Activated CD8-positive, alpha-beta T cell treated with anti-CD3 and anti-CD28 coated beads, Interleukin-2, amount 10 ng/mL, durations not matched to agents 7 days and 5 days (primary cell): ENCODE measurements at regions of chr17 and their contacts with region 1.

Region 1: GRCh38 chr17:2282297-2282873 is 21.2 kb downstream of the SMG6 start:
- DNase-seq: no peak
- ATAC-seq: peak; percentile 54
- H3K4me3 Mint-ChIP-seq: no peak overlapping the region
- H3K27ac Mint-ChIP-seq: peak overlapping the region; percentile 76
- H3K4me1 Mint-ChIP-seq: peaks cover 50% of the 10 kb centered on the region
- H3K27me3 Mint-ChIP-seq: no peaks in the 10 kb centered on the region

Region 2: GRCh38 chr17:1643293-1643998 is 638.9 kb before region 1 on chr17:
- CTCF ChIA-PET with region 1: no interaction called
- POLR2A ChIA-PET with region 1: no interaction called
- DNase-seq: peak; percentile 70
- ATAC-seq: peak; percentile 64
- H3K4me3 Mint-ChIP-seq: peak overlapping the region; percentile 73
- H3K27ac Mint-ChIP-seq: no peak overlapping the region
- H3K4me1 Mint-ChIP-seq: peaks cover 35% of the 10 kb centered on the region
- H3K27me3 Mint-ChIP-seq: no peaks in the 10 kb centered on the region

Region 3: DNA sequence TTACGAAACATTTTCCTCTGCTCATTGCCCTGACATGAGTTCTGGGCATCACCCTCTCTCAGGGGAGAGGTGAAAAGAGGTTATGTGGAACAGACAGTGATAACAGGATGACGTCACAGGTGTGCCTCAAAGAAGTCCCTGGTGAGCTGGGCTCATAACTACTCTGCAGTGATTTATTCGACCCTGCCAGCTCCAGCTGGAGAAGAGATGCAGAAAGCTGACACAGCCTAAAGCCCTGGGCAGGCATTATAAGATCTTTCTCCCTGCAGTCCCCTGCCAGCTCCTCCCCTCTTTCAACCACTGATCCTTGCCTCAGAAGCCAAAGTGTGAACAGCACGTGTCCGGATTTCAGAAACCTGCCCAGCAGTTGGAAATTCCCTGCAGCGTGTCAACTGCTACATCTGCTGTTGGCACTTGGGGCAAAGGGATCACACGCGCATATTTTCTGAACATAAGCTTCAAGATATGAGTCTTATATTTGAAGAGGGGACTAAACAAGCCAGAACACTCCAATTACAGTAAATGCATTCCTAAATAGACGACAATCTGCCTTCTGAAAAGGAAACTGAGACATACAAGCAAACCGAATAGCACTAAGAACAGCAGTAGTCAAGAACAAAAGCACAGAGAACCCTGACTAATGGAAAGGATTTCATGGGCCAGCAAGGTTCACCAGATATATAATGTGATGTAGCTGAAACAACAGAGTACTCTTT is 59.3 kb before region 1 on chr17:
- CTCF ChIA-PET with region 1: interaction called, 11 read pairs
- POLR2A ChIA-PET with region 1: no interaction called
- DNase-seq: peak; percentile 62
- ATAC-seq: peak; percentile 82
- H3K4me3 Mint-ChIP-seq: no peak overlapping the region
- H3K27ac Mint-ChIP-seq: peak overlapping the region; percentile 26
- H3K4me1 Mint-ChIP-seq: peaks cover 41% of the 10 kb centered on the region
- H3K27me3 Mint-ChIP-seq: no peaks in the 10 kb centered on the region

Region 4: DNA sequence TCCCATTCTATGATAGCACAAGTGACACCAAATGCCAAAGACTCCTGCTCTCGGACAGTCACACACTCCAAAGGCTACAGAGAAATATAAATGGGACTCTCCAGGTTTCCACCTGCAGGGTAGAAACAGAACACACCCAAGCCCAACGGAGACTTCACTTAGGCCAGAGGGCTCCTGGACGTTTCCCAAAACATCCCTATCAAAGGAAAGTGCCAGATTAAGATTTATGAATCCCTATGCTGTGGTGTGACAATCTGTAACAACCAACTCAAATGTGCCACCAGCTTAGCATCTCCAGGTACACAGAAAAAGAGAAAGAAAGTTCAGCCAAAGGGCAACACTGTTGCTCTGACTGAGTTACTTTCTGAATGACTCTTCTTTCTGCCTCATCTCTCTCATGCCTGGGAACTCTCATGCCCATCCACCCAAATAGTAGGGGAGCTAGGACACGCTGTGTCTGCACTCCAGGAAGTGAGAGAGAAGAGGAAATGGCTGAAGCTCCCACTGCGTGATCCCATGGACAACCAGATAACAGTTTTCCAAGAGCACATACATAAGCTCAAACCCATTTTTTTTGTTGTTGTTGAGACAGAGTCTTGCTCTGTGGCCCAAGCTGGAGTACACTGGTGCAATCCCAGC is 28.5 kb before region 1 on chr17:
- CTCF ChIA-PET with region 1: interaction called, 61 read pairs
- POLR2A ChIA-PET with region 1: interaction called, 5 read pairs
- DNase-seq: peak; percentile 57
- ATAC-seq: peak; percentile 80
- H3K4me3 Mint-ChIP-seq: peak overlapping the region; percentile 46
- H3K27ac Mint-ChIP-seq: peak overlapping the region; percentile 92
- H3K4me1 Mint-ChIP-seq: peaks cover 78% of the 10 kb centered on the region
- H3K27me3 Mint-ChIP-seq: no peaks in the 10 kb centered on the region

Region 5: DNA sequence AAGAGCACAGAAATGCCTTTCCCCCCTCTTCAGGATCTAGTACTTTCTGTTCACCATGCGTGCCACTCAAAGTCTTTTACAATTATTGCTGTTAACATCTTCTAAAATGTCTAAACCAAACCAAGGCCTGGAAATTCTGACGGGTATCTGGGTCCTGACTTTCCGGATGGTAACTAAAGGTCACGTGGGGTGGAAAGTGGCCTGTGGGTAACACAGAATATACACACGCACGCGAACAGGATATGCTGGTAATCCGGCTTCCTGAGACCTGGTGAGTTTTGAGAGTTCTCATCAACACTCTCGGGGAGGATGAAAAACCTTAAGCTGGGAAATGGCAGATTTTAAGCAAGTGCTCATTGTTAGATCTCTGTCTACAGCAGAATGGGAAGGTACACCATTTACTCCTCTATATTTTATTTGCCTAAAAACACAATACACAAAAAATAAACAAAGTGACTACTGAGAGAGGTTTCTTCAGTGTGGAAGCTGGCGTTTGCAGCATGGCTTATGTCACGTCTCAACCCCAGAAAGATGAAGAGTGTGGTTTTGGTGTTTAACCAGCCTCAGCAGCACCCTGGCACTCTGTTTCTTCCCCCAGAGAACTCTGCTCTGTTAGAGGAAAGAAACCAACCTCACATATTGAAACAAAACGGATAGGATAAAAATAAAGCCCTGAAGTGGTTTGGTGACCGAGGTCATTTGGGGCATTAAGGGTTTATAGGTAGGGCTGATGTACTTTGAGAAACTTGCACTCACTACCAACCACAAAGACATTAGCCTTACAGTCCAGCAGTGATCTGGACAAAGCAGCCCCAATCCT is 16.1 kb before region 1 on chr17:
- CTCF ChIA-PET with region 1: interaction called, 63 read pairs
- POLR2A ChIA-PET with region 1: interaction called, 12 read pairs
- DNase-seq: peak; percentile 96
- ATAC-seq: peak; percentile 82
- H3K4me3 Mint-ChIP-seq: peak overlapping the region; percentile 74
- H3K27ac Mint-ChIP-seq: peak overlapping the region; percentile 99
- H3K4me1 Mint-ChIP-seq: peaks cover 88% of the 10 kb centered on the region
- H3K27me3 Mint-ChIP-seq: no peaks in the 10 kb centered on the region

Region 6: DNA sequence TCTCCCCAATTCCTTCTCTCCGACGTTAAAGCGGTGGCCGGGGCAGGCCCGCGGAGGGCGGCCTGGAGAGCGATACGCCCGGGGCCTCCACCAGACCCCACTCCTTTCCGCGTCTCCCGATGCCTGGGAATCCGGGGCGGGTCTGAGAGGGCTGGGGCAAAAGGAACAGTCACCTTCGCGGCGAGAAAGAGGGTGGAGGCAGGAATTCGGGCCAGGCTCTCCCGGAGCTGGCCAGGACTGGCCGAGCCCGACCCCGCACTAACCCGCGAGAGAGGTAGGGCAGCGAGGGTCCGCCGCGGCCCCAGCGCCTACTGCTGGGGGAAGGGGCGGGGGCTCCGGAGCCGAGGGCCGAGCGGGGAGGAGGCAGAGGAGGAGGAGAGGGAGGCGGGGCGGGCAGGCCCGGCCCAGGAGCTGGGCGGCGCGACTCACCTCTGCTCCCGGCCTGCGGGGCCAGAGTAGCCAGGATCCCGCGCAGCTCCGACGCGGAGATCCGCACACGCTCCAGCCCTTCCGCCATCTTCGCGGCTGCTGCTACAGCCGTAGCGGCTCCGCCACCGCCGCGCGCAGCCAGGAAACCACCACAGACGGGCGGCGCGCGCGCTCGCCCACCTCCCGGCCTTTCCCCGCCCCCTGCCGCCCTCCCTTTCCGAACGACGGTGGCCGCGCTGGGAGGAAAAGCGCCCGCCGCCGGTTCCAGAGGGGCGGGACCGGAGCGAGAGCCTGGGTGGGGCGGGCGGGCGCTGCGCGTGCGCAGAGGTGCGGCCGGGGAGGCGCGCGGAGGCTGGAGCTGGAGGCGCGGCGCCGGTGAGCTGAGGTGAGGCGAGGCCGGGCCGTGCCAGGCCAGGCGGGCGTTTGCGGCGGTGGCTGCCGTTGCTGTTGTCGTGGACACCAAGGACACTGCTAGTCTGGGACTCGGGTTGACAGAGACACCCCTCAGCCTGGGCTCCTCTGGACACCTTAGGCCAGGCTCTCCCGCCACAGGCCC is 21.1 kb after region 1 on chr17 and contains the starts of genes SMG6 and SRR:
- CTCF ChIA-PET with region 1: interaction called, 12 read pairs
- POLR2A ChIA-PET with region 1: no interaction called
- DNase-seq: peak; percentile 96
- ATAC-seq: peak; percentile 90
- H3K4me3 Mint-ChIP-seq: peak within 1 kb of the TSS; percentile 95
- H3K27ac Mint-ChIP-seq: peak within 1 kb of the TSS; percentile 83
- H3K4me1 Mint-ChIP-seq: peaks cover 56% of the 10 kb centered on the region
- H3K27me3 Mint-ChIP-seq: no peaks in the 10 kb centered on the region
- total RNA-seq, gene SMG6: 49.8 to 55.9 TPM
- total RNA-seq, gene SRR: 18.7 to 23.1 TPM

Region 7: GRCh38 chr17:2361010-2361760 is 78.8 kb after region 1 on chr17:
- CTCF ChIA-PET with region 1: no interaction called
- POLR2A ChIA-PET with region 1: no interaction called
- DNase-seq: no peak
- ATAC-seq: no peak
- H3K4me3 Mint-ChIP-seq: no peak overlapping the region
- H3K27ac Mint-ChIP-seq: no peak overlapping the region
- H3K4me1 Mint-ChIP-seq: no peaks in the 10 kb centered on the region
- H3K27me3 Mint-ChIP-seq: no peaks in the 10 kb centered on the region